ENCODE measurements at regions of chr6 and their contacts with region 1.

Region 1: GRCh38 chr6:30453508-30454116 is 35.7 kb upstream of the HLA-E start:
- DNase-seq: peak; percentile 82
- ATAC-seq: peak; percentile 93
- H3K4me3 Mint-ChIP-seq: peak overlapping the region; percentile 29
- H3K27ac Mint-ChIP-seq: no peak overlapping the region
- H3K4me1 Mint-ChIP-seq: peaks cover 26% of the 10 kb centered on the region
- H3K27me3 Mint-ChIP-seq: peaks cover 67% of the 10 kb centered on the region
- CTCF ChIP-seq: no peak

Region 2: GRCh38 chr6:30260036-30260504 is 193.5 kb before region 1 on chr6:
- CTCF ChIA-PET with region 1: no interaction called
- POLR2A ChIA-PET with region 1: no interaction called
- intact Hi-C with region 1: no loop called
- DNase-seq: no peak
- ATAC-seq: peak; percentile 9
- H3K4me3 Mint-ChIP-seq: peak overlapping the region; percentile 98
- H3K27ac Mint-ChIP-seq: peak overlapping the region; percentile 97
- H3K4me1 Mint-ChIP-seq: peaks cover 36% of the 10 kb centered on the region
- H3K27me3 Mint-ChIP-seq: no peaks in the 10 kb centered on the region
- CTCF ChIP-seq: no peak

Region 3: DNA sequence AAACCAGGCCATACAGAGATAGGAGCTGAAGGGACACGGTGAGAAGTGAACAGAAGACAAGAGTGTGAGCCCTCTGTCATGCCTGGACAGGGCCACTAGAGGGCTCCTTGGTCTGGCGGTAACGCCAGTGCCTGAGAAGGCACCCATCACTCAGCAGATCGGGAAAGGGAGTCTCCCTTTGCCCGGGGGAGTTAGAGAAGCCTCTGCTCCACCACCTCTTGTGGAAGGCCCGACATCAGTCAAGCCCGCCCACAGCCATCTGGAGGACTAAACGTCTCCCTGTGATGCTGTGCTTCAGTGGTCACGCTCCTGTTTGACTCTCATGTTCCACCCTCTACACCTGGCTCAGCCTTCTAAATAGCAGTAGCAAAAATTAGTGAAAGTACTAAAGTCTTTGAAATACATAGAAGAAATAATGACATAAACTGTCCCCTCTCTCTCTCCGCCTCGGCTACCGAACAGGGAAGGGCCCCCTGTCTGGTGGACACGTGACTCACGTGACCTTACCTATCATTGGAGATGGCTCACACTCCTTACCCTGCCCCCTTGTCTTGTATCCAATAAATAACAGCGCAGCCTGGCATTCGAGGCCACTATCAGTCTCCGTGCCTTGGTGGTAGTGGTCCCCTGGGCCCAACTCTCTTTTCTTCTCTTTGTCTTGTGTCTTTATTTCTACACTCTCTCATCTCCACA is 42.0 kb before region 1 on chr6:
- CTCF ChIA-PET with region 1: interaction called, 3 read pairs
- POLR2A ChIA-PET with region 1: no interaction called
- intact Hi-C with region 1: loop called (anchors 5 kb)
- DNase-seq: peak; percentile 35
- ATAC-seq: peak; percentile 62
- H3K4me3 Mint-ChIP-seq: no peak overlapping the region
- H3K27ac Mint-ChIP-seq: no peak overlapping the region
- H3K4me1 Mint-ChIP-seq: peaks cover 6% of the 10 kb centered on the region
- H3K27me3 Mint-ChIP-seq: peaks cover 45% of the 10 kb centered on the region
- CTCF ChIP-seq: no peak

Region 4: DNA sequence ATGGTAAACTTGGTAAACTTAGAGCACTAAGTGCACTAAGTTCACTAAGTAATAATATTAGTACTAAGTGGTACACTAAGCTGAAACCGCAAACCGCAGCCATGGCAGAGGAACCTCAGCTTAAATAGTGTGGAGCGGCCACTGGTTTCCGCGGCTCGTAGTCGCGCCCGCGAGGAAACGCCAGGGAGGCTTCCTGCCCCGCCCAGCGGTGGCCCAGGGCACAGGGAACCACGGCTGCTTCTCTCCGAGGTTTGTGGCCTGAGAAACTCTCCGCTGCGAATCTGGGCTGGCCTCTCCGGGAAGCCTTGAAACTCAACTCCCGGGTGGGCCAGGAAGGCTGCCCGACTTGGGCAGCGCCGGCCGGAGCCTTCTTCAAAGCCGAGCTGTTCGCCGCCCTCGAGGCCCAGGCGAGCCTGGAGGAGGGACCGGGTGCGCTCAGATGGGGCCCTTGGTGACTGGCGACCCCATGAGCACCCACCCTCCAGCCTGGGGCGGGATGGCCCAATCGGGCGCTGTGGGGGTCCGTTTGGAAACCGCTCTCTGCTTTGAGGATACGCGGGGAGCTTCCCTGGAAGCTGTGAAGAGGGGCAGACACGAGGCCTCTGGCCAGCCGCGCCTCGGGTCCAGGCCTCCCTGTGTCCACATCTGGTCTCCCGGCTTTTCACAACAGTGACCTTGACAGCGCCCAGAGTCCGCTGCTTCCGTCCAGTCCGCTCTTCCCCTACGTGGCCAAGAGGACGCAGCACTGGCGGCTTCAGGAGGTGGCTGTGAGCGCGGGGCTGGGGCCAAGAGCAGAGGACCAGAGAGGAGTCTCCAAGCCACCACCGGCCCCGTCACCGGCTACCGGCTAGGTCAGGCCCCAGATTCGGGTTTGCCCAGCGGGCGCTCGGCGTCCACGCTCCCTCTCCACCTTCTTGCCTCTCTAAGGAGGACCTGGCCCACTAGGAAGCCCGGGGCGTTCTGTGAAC is 10.3 kb after region 1 on chr6:
- CTCF ChIA-PET with region 1: interaction called, 54 read pairs
- POLR2A ChIA-PET with region 1: interaction called, 7 read pairs
- intact Hi-C with region 1: loop called (anchors 1 kb)
- DNase-seq: peak; percentile 46
- ATAC-seq: peak; percentile 48
- H3K4me3 Mint-ChIP-seq: peak overlapping the region; percentile 58
- H3K27ac Mint-ChIP-seq: no peak overlapping the region
- H3K4me1 Mint-ChIP-seq: peaks cover 37% of the 10 kb centered on the region
- H3K27me3 Mint-ChIP-seq: peaks cover 68% of the 10 kb centered on the region
- CTCF ChIP-seq: no peak

Region 5: DNA sequence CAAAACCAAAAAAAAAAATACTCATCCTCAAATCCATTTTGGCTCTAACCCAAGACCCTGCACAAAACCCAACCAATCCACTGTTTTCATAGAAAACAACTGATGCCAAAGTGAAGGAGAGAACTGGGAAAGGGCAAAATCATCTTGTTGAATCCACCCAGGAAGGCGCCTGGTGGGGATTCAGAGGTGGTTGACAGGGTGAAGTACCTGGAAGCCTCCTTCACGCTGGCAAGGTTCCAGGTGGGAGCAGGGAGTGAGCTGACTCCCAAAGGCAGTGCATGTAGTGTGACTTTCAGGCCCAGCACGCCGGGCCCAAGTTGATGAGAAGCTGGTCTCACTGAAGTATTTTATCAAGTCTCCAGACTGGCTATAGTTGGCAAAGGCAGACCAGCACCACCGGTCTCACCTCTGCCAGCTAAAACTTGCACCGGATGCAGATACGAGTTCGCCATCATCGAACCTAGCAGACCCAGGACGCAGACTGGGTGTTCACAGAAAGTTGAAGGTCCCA is 146.9 kb after region 1 on chr6:
- CTCF ChIA-PET with region 1: interaction called, 10 read pairs
- POLR2A ChIA-PET with region 1: interaction called, 7 read pairs
- intact Hi-C with region 1: loop called (anchors 1 kb)
- DNase-seq: no peak
- ATAC-seq: no peak
- H3K4me3 Mint-ChIP-seq: no peak overlapping the region
- H3K27ac Mint-ChIP-seq: no peak overlapping the region
- H3K4me1 Mint-ChIP-seq: peaks cover 9% of the 10 kb centered on the region
- H3K27me3 Mint-ChIP-seq: no peaks in the 10 kb centered on the region
- CTCF ChIP-seq: no peak

Region 6: GRCh38 chr6:31087494-31088089 is 634.0 kb after region 1 on chr6:
- CTCF ChIA-PET with region 1: no interaction called
- POLR2A ChIA-PET with region 1: no interaction called
- intact Hi-C with region 1: loop called (anchors 10 kb)
- DNase-seq: peak; percentile 67
- ATAC-seq: peak; percentile 96
- H3K4me3 Mint-ChIP-seq: no peak overlapping the region
- H3K27ac Mint-ChIP-seq: no peak overlapping the region
- H3K4me1 Mint-ChIP-seq: peaks cover 4% of the 10 kb centered on the region
- H3K27me3 Mint-ChIP-seq: peaks cover 17% of the 10 kb centered on the region
- CTCF ChIP-seq: peak; percentile 37